GM12878 (cell line): ENCODE measurements at regions of chr9 and their contacts with region 1.

Region 1: DNA sequence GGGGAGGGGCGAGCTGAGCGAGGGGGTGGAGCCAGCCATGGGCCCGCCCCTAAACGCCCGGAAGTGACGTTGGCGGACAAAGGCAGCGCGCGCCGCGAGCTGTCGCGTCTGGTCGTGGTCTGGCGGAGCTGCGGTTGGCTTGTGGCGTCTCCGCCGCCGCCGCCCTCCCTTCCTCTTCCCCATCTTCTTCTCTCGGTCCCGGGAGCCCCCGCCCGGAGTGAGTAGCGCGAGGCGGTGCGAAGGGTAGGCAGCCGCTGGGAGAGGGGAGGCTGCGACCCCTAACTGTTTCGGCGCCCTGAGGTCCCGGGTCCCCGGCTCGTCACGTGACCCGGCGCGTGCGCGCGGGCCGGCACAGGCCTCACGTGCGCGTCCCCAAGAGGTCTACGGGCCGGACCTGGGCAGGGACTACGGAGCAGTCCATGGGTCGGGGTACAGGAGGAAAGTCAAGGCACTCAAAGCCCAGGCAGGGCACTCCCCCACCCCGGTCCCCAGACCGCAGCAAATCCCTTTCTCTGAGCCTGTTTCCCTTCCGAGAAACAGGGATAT is at the start of gene NTMT1:
- DNase-seq: peak; percentile 39
- ATAC-seq: peak; percentile 80
- H3K4me3 ChIP-seq: peak within 1 kb of the TSS; percentile 93
- H3K27ac ChIP-seq: peak within 1 kb of the TSS; percentile 90
- H3K4me1 ChIP-seq: peaks cover 18% of the 10 kb centered on the region
- H3K27me3 ChIP-seq: peaks cover 0 to 2% of the 10 kb centered on the region in 2 experiments; a peak in 2 of 4 replicates
- CTCF ChIP-seq: no peak
- EP300 ChIP-seq: no peak; a peak in 1 of 4 replicates
- POLR2A ChIP-seq: peak; percentile 98
- RAD21 ChIP-seq: no peak
- polyA plus RNA-seq, gene NTMT1: 12.8 to 18.3 TPM

Region 2: GRCh38 chr9:129110740-129111527 is 515.2 kb before region 1 on chr9 and contains the starts of genes CRAT and PTPA:
- CTCF ChIA-PET with region 1: interaction called, 11 read pairs
- POLR2A ChIA-PET with region 1: interaction called, 7 read pairs
- RAD21 ChIA-PET with region 1: no interaction called
- SMC1A ChIA-PET with region 1: interaction called, 4 read pairs
- in situ Hi-C with region 1: no loop called
- intact Hi-C with region 1: no loop called
- DNase-seq: peak; percentile 63
- ATAC-seq: peak; percentile 95
- H3K4me3 ChIP-seq: peak within 1 kb of the TSS; percentile 98
- H3K27ac ChIP-seq: peak within 1 kb of the TSS; percentile 92
- H3K4me1 ChIP-seq: peaks cover 7% of the 10 kb centered on the region
- H3K27me3 ChIP-seq: no peaks in the 10 kb centered on the region; a peak in 1 of 4 replicates
- CTCF ChIP-seq: no peak
- EP300 ChIP-seq: no peak
- POLR2A ChIP-seq: peak; percentile 95
- RAD21 ChIP-seq: no peak
- polyA plus RNA-seq, gene CRAT: 0.10 to 0.47 TPM
- polyA plus RNA-seq, gene PTPA: 1.6 to 3.2 TPM

Region 3: DNA sequence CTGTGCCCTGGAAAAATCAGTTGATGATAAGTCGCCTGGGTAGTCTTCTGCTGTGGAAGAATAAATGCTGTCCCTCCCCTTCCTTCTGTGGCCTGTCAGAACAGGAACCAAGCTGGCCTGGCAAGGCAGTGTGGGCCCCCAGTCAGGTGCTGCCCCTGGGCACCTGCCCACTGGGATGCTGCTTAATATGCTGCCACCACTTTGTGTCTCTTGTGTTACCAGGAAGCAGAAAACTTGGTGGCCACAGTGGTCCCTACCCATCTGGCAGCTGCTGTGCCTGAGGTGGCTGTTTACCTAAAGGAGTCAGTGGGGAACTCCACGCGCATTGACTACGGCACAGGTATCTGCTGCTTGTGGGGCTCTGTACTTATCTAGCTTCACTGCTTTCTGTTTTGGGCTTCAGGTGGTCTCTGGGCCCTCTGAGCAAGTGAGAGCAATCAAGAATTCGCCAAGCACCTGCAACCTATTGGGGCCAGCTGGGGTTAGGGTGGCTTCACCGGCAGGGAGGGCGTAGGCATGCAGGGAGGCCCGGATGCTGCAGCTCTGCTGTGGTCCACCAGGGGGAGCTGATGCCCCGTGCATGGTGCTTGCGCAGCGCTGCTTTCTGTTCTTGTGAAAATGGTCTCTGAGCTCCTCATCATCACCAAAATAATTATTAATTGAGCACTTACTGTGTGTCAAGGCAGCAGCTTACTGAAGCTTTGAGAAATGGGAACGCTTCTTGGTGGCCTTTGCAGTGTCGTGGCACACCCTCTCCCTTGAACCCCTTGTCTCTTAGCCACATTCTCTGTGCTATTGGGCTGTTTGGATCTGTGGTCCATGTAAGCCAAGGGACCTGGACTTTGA is 494.6 kb before region 1 on chr9:
- CTCF ChIA-PET with region 1: interaction called, 194 read pairs
- POLR2A ChIA-PET with region 1: interaction called, 4 read pairs
- RAD21 ChIA-PET with region 1: interaction called, 37 read pairs
- SMC1A ChIA-PET with region 1: interaction called, 50 read pairs
- in situ Hi-C with region 1: no loop called
- intact Hi-C with region 1: no loop called
- DNase-seq: no peak
- ATAC-seq: peak; percentile 100
- H3K4me3 ChIP-seq: no peak overlapping the region
- H3K27ac ChIP-seq: no peak overlapping the region; the same call in 1 of the 2 replicates
- H3K4me1 ChIP-seq: no peaks in the 10 kb centered on the region
- H3K27me3 ChIP-seq: no peaks in the 10 kb centered on the region
- CTCF ChIP-seq: peak; percentile 98 to 99 (median 98); a peak in 5 of 6 replicates
- EP300 ChIP-seq: no peak
- POLR2A ChIP-seq: no peak
- RAD21 ChIP-seq: peak; percentile 83

Region 4: GRCh38 chr9:129584136-129584535 is 42.0 kb before region 1 on chr9:
- CTCF ChIA-PET with region 1: interaction called, 17 read pairs
- POLR2A ChIA-PET with region 1: interaction called, 3 read pairs
- RAD21 ChIA-PET with region 1: interaction called, 3 read pairs
- SMC1A ChIA-PET with region 1: no interaction called
- in situ Hi-C with region 1: no loop called
- intact Hi-C with region 1: no loop called
- DNase-seq: peak; percentile 76
- ATAC-seq: peak; percentile 83
- H3K4me3 ChIP-seq: no peak overlapping the region; the same call in 1 of the 2 replicates
- H3K27ac ChIP-seq: peak overlapping the region; percentile 52; the same call in 1 of the 2 replicates
- H3K4me1 ChIP-seq: peaks cover 58% of the 10 kb centered on the region
- H3K27me3 ChIP-seq: no peaks in the 10 kb centered on the region
- CTCF ChIP-seq: no peak
- EP300 ChIP-seq: no peak
- POLR2A ChIP-seq: no peak
- RAD21 ChIP-seq: no peak

Region 5: DNA sequence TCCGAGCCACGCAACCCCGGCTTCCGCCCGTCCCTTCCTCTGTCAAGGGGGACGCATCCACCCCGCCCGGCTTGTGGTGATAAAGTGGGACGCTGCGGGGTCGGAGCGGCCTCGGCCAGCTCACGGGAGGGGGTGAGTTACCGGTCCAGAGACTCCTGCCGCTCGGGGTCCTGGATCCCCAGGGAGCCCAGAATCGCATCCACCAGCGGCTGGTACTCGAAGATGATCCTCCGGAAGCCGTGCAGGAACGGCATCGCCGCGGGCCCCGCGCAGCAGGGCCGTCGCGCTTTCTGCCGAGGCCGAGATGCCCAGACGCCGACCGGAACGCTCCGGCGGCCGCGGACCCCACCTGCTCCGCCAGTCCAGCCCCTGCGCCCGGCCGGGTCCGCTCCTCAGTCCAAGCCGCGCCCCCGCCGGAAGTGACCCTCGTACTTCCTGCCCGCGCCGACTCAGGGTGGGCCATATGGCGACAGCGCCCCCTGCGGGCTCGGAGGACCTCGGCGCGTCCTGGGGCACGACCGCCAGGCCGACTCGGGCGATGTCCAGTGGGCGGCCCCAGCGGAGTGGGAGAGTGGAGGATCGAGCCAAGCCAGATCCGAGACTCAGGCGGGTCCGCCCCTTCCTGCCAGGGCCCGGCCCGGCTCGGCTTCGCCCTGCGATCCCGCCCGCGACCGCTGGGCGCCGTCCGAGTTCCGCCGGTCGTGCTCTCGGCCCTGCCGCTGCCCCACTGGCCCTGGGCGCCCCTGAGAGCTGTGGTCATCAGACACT is 15.8 kb after region 1 on chr9 and contains the start of gene ASB6:
- CTCF ChIA-PET with region 1: interaction called, 13 read pairs
- POLR2A ChIA-PET with region 1: interaction called, 4 read pairs
- RAD21 ChIA-PET with region 1: interaction called, 7 read pairs
- SMC1A ChIA-PET with region 1: interaction called, 4 read pairs
- in situ Hi-C with region 1: no loop called
- intact Hi-C with region 1: no loop called
- DNase-seq: peak; percentile 69
- ATAC-seq: peak; percentile 100
- H3K4me3 ChIP-seq: peak within 1 kb of the TSS; percentile 90
- H3K27ac ChIP-seq: peak within 1 kb of the TSS; percentile 63
- H3K4me1 ChIP-seq: peaks cover 6% of the 10 kb centered on the region; the same call in 1 of the 2 replicates
- H3K27me3 ChIP-seq: no peaks in the 10 kb centered on the region
- CTCF ChIP-seq: peak; percentile 80 to 92 (median 89)
- EP300 ChIP-seq: no peak
- POLR2A ChIP-seq: peak; percentile 89
- RAD21 ChIP-seq: peak; percentile 55
- polyA plus RNA-seq, gene ASB6: 0.80 to 1.1 TPM

Region 6: DNA sequence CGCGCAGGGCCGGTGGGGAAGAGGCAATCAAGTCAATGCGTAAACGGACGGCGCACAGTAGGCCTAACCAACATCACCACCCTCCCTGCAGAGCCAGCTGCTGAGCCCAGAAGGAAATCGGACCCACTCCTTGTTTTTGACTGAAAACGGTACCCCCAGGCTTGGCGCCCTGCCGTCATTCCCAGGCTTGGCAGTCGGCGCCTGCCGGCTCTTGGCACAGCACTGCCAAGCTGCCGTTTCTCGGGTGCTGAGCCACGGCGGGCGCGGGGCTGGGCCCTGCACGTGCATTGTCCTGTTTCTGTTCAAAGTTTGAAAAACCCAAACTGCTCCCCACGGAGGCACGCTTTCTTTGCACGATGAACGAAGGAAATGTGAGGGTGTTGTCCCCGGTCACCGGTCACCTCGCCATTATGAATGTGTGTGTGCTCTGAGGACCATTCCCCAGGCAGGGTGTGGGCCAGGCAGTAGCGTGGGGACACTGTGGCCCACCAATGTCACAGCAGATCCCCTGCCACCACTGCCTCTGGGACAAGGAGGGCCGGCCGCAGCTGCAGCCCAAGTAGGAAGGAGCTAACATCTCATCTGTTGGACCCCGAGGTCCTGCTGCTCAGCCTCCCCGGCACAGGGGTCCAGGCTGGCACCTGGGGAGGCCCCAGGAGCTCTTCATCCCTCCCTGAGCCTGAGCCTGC is 1292.9 kb after region 1 on chr9:
- CTCF ChIA-PET with region 1: no interaction called
- POLR2A ChIA-PET with region 1: no interaction called
- RAD21 ChIA-PET with region 1: no interaction called
- SMC1A ChIA-PET with region 1: no interaction called
- in situ Hi-C with region 1: no loop called
- intact Hi-C with region 1: no loop called
- DNase-seq: no peak
- ATAC-seq: no peak
- H3K4me3 ChIP-seq: no peak overlapping the region
- H3K27ac ChIP-seq: no peak overlapping the region
- H3K4me1 ChIP-seq: no peaks in the 10 kb centered on the region
- H3K27me3 ChIP-seq: no peaks in the 10 kb centered on the region; a peak in 1 of 4 replicates
- CTCF ChIP-seq: no peak
- EP300 ChIP-seq: no peak
- POLR2A ChIP-seq: no peak
- RAD21 ChIP-seq: no peak